HEK293 (cell line): ENCODE measurements at regions of chr2 and their contacts with region 1.

Region 1: GRCh38 chr2:101387151-101387807 is at the start of gene CREG2:
- H3K4me3 ChIP-seq: peak within 1 kb of the TSS; percentile 69
- H3K27ac ChIP-seq: no peak within 1 kb of the TSS; the same call in 1 of the 2 replicates
- H3K4me1 ChIP-seq: no peaks in the 10 kb centered on the region
- CTCF ChIP-seq: peak; percentile 69; the same call in 1 of the 2 replicates

Region 2: GRCh38 chr2:101349893-101350662 is 37.2 kb before region 1 on chr2:
- CTCF ChIA-PET with region 1: interaction called, 11 read pairs
- POLR2A ChIA-PET with region 1: no interaction called
- H3K4me3 ChIP-seq: no peak overlapping the region
- H3K27ac ChIP-seq: no peak overlapping the region
- H3K4me1 ChIP-seq: no peaks in the 10 kb centered on the region
- CTCF ChIP-seq: no peak

Region 3: GRCh38 chr2:101419096-101419663 is 31.9 kb after region 1 on chr2:
- CTCF ChIA-PET with region 1: interaction called, 10 read pairs
- POLR2A ChIA-PET with region 1: no interaction called
- H3K4me3 ChIP-seq: no peak overlapping the region
- H3K27ac ChIP-seq: no peak overlapping the region
- H3K4me1 ChIP-seq: no peaks in the 10 kb centered on the region
- CTCF ChIP-seq: 0 out of 2 replicates have a peak, but pooled peaks have one; percentile 13

Region 4: DNA sequence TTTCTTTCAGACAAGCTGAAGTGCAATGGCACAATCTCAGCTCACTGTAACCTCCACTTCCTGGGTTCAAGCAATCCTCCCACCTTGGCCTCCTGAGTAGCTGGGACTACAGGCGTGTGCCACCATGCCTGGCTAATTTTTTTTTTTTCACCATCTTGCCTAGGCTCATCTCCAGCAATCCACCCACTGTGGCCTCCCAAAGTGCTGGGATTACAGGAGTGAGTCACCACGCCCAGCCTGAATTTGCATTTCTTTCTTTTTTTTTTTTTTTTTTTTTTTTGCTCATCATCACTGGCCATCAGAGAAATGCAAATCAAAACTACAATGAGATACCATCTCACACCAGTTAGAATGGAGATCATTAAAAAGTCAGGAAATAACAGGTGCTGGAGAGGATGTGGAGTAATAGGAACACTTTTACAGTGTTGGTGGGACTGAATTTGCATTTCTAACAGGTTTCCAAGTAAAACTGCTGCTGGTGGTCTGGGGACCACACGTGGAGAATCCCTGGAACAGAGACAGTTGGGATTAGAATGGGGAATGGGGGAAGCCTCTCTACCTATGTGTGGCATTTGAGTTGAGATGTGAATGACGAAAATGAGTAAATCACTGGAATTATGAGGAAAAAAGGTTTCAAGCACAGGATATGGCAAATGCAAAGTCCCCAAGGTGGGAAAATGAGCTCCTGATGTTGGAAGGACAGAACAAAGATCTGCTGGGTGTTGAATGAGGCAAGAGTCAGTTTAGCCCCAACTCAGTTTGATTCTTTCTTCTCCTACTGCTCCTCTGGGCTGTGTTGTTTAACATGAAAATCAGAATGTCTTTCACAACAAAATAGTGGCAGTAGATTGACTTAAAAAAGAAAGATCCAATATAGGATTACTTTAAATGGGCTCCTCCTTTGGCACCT is 221.4 kb after region 1 on chr2:
- CTCF ChIA-PET with region 1: no interaction called
- POLR2A ChIA-PET with region 1: no interaction called
- H3K4me3 ChIP-seq: no peak overlapping the region
- H3K27ac ChIP-seq: no peak overlapping the region
- H3K4me1 ChIP-seq: no peaks in the 10 kb centered on the region
- CTCF ChIP-seq: no peak